ENCODE measurements at regions of chr1 and their contacts with region 1.

Region 1: DNA sequence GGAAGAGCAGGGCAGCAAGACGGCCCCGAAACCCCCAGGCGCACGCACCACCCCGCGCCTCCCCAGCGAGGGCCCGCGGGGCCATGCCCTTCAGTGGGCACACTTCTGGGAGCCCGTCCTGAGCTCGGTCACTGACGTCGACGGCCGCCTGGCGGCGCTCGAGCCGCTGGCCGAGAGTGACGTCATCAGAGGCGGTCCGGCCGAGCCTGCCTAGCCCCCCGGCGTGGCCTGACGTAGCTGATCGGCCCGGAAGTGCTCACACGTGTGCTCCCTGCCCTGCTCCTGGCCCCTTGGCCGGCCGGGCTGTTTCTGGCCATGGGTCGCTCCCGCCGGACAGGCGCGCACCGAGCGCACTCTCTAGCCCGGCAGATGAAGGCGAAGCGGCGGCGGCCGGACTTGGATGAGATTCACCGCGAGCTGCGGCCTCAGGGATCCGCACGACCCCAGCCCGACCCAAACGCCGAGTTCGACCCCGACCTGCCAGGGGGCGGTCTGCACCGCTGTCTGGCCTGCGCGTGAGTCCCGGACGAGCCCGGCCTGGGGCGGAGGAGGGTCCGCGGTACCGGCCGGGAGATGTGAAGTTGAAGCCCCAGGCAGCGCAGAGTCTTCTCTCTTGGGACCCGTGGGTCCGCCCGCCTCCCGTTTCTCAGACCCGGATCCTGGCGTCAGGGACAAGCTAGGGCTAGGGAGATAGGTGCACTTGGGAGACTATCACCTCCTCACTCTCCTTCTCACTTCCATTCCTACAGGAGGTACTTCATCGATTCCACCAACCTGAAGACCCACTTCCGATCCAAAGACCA is at the start of gene ZNF593:
- DNase-seq: peak; percentile 92 to 96 (median 94)
- H3K4me3 ChIP-seq: peak within 1 kb of the TSS; percentile 10 to 84 (median 54)
- H3K27ac ChIP-seq: peak within 1 kb of the TSS in 4 of 5 donors; percentile 33 to 86 (median 68)
- H3K4me1 ChIP-seq: peaks cover 7 to 15% of the 10 kb centered on the region in 2 donors
- H3K27me3 ChIP-seq: no peaks in the 10 kb centered on the region
- CTCF ChIP-seq: peak; percentile 75 to 97 (median 88)
- POLR2A ChIP-seq: peak; percentile 25 to 40
- total RNA-seq, gene ZNF593: 17.8 to 44.7 (median 30.6) TPM

Region 2: GRCh38 chr1:26035959-26036755 is 133.7 kb before region 1 on chr1:
- intact Hi-C with region 1: loop called in 1 of 2 experiments (anchors 10 kb)
- DNase-seq: peak; percentile 88 to 96 (median 93)
- H3K4me3 ChIP-seq: peak overlapping the region; percentile 43 to 91 (median 57)
- H3K27ac ChIP-seq: peak overlapping the region in 4 of 5 donors; percentile 78 to 96 (median 90)
- H3K4me1 ChIP-seq: peaks cover 14 to 17% of the 10 kb centered on the region in 2 donors
- H3K27me3 ChIP-seq: no peaks in the 10 kb centered on the region
- CTCF ChIP-seq: peak; percentile 95 to 100 (median 100)
- POLR2A ChIP-seq: no peak

Region 3: GRCh38 chr1:26233903-26234643 is 64.2 kb after region 1 on chr1 and contains the start of gene CEP85:
- intact Hi-C with region 1: loop called in 1 of 2 experiments (anchors 5 kb)
- DNase-seq: peak; percentile 98 to 99 (median 99)
- H3K4me3 ChIP-seq: peak within 1 kb of the TSS; percentile 43 to 97 (median 54)
- H3K27ac ChIP-seq: peak within 1 kb of the TSS; percentile 81 to 95 (median 88)
- H3K4me1 ChIP-seq: peaks cover 0 to 7% of the 10 kb centered on the region in 2 donors
- H3K27me3 ChIP-seq: no peaks in the 10 kb centered on the region
- CTCF ChIP-seq: peak; percentile 63 to 82 (median 78)
- POLR2A ChIP-seq: peak; percentile 64 to 87
- total RNA-seq, gene CEP85: 2.6 to 16.4 (median 5.8) TPM

Region 4: GRCh38 chr1:26321315-26322041 is 151.6 kb after region 1 on chr1:
- intact Hi-C with region 1: loop called in 1 of 2 experiments (anchors 5 kb)
- DNase-seq: peak; percentile 88 to 95 (median 92)
- H3K4me3 ChIP-seq: no peak overlapping the region
- H3K27ac ChIP-seq: no peak overlapping the region
- H3K4me1 ChIP-seq: no peaks in the 10 kb centered on the region
- H3K27me3 ChIP-seq: no peaks in the 10 kb centered on the region
- CTCF ChIP-seq: peak; percentile 74 to 96 (median 90)
- POLR2A ChIP-seq: no peak